ENCODE measurements at regions of chr19 and their contacts with region 1.

Region 1: DNA sequence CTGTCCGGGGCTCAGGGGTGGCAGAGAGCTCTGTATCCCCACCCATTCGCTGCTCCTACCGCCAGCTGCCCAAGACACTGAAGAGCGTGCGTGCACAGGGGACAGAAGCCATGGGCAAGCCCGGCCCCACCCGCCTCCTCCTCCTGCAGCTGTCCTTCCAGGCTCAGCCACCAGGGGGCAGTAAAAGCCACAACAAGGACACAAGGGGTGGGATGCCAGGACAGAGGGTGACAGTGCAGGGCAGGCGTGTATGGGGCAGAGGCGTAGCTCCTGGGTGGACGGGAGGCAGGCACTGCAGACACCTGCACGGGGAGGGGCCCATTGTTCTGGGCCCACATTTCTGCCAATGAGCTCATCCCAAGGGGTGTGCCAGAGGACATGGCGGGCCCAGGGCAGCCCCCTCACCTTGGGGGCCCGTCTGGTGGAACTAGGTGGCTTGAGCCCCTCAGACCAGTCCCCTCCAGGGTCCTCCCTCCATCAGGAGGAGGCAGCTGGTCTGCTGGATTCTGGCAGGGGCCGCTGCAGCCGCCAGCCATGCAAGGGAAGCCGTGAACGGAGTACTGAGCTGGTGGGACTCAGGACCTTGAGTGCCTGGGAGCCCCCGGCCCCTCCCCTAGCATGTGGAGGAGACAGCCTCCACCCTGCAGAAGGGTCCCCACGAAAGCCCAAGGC is 61.1 kb downstream of the MLLT1 start:
- DNase-seq: peak; percentile 75
- ATAC-seq: peak; percentile 86
- H3K4me3 ChIP-seq: no peak overlapping the region
- H3K27ac ChIP-seq: no peak overlapping the region
- H3K4me1 ChIP-seq: peaks cover 16% of the 10 kb centered on the region
- H3K27me3 ChIP-seq: no peaks in the 10 kb centered on the region
- CTCF ChIP-seq: peak; percentile 92
- POLR2A ChIP-seq: no peak
- RAD21 ChIP-seq: peak; percentile 93

Region 2: DNA sequence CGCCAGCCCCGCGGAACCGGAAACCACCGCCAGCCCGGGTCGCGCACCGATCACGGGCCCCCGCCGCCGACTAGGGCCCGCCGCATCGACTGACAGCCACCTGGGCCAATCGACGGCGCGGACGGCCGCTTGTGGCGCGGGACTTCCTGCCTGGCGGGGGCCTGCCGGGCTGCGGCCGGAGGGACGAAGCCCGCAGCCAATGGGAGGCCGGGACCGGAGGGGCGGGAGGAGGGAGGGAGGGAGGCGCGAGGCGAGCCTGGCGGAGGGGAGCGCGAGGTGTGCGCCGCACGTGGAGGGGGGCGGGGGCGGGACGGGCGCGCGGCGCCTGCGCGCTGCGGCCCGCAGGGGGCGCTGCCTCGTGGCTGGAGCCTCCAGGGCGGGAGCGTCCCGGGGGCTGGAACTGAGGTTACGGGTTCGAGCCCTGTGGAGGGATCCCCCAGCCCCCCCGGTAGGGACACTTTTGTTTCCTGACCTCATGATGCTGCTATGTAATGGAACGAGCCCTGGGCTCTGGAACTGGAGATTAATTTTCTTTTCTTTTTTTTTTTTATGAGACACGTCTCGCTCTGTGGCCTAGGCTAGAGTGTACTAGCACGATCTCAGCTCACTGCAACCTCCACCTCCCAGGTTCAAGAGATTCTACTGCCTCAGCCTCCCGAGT is 61.4 kb after region 1 on chr19 and contains the start of gene MLLT1:
- CTCF ChIA-PET with region 1: interaction called, 3 read pairs
- POLR2A ChIA-PET with region 1: no interaction called
- dilution Hi-C with region 1: no loop called
- in situ Hi-C with region 1: loop called (anchors 10 kb)
- intact Hi-C with region 1: loop called (anchors 5 kb)
- DNase-seq: peak; percentile 96
- ATAC-seq: peak; percentile 98
- H3K4me3 ChIP-seq: peak within 1 kb of the TSS; percentile 76
- H3K27ac ChIP-seq: peak within 1 kb of the TSS; percentile 62
- H3K4me1 ChIP-seq: peaks cover 25% of the 10 kb centered on the region
- H3K27me3 ChIP-seq: no peaks in the 10 kb centered on the region
- CTCF ChIP-seq: peak; percentile 73
- POLR2A ChIP-seq: no peak
- RAD21 ChIP-seq: peak; percentile 57
- total RNA-seq, gene MLLT1: 1.3 and 1.7 TPM in 2 replicates

Region 3: DNA sequence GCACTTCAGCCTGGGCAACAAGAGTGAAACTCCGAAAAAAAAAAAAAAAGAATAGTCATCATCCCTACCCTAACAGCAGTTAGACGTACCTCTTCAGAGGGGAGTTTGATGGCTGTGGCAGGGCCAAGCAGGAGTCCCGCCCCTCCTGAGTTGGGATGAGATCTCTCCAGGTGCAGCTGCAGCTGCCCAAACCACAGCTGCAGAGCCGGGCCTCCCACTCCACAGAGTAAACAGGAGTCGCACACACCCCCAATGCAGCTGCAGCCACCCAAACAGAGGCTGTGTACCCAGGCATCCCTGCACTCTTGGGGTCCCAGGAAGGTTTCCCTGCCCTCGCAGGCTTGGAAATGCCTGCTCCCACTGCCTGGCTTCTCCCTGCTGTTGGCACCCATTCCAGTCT is 78.6 kb after region 1 on chr19:
- CTCF ChIA-PET with region 1: interaction called, 11 read pairs
- POLR2A ChIA-PET with region 1: no interaction called
- dilution Hi-C with region 1: no loop called
- in situ Hi-C with region 1: no loop called
- intact Hi-C with region 1: loop called (anchors 1 kb)
- DNase-seq: no peak
- ATAC-seq: no peak
- H3K4me3 ChIP-seq: no peak overlapping the region
- H3K27ac ChIP-seq: no peak overlapping the region
- H3K4me1 ChIP-seq: no peaks in the 10 kb centered on the region
- H3K27me3 ChIP-seq: no peaks in the 10 kb centered on the region; the same call in none of the 2 replicates
- CTCF ChIP-seq: no peak
- POLR2A ChIP-seq: no peak
- RAD21 ChIP-seq: no peak

Region 4: GRCh38 chr19:6393074-6393983 is 174.7 kb after region 1 on chr19 and contains the start of gene GTF2F1:
- CTCF ChIA-PET with region 1: no interaction called
- POLR2A ChIA-PET with region 1: no interaction called
- dilution Hi-C with region 1: no loop called
- in situ Hi-C with region 1: no loop called
- intact Hi-C with region 1: loop called (anchors 1 kb)
- DNase-seq: peak; percentile 95
- ATAC-seq: peak; percentile 94
- H3K4me3 ChIP-seq: peak within 1 kb of the TSS; percentile 66
- H3K27ac ChIP-seq: peak within 1 kb of the TSS; percentile 90
- H3K4me1 ChIP-seq: peaks cover 11% of the 10 kb centered on the region
- H3K27me3 ChIP-seq: no peaks in the 10 kb centered on the region
- CTCF ChIP-seq: peak; percentile 8; the same call in 1 of the 2 replicates
- POLR2A ChIP-seq: peak; percentile 68; the same call in 1 of the 2 replicates
- RAD21 ChIP-seq: no peak
- total RNA-seq, gene GTF2F1: 43.7 and 53.0 TPM in 2 replicates